H1 (cell line): ENCODE measurements at regions of chr7 and their contacts with region 1.

Region 1: GRCh38 chr7:3143869-3144775 is 100.5 kb upstream of the CARD11 start:
- DNase-seq: no peak
- H3K4me3 ChIP-seq: no peak overlapping the region
- H3K27ac ChIP-seq: no peak overlapping the region
- H3K4me1 ChIP-seq: no peaks in the 10 kb centered on the region
- H3K27me3 ChIP-seq: no peaks in the 10 kb centered on the region
- CTCF ChIP-seq: no peak
- EP300 ChIP-seq: no peak
- POLR2A ChIP-seq: no peak
- RAD21 ChIP-seq: no peak

Region 2: DNA sequence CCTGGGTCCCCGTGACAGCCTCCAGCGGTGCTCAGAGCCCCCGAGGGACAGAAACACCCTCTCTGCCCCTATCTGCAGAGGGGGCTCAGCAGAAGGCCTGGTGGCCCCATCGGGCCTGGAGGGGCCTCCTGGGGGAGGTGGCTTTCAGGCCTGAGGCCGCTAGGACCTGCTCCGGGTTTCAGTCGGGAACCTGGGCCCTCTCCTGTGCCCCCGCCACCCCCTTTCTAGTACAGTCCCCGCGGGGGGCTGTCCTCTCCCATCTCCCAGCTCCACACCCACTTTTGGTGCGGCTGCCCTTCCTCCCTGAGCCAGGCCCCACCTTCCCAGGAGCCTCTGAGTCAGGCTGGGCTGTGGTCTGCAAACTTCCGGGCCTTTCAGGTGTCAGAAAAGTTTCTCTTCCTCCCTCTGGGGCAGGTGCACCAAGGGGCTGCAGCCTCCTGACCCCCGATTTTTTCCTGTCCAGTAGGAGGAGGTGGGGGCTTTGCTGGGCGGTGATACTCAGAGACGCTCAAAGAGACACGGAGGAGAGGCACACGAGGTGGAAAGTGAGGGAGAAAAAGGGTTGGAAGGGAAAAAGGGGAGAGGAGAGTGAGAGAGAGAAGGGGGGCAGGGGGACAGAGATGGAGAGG is 101.1 kb before region 1 on chr7:
- CTCF ChIA-PET with region 1: no interaction called
- POLR2A ChIA-PET with region 1: no interaction called
- DNase-seq: peak in 1 of 2 experiments; percentile 63
- H3K4me3 ChIP-seq: peak overlapping the region; percentile 49 to 99 (median 56)
- H3K27ac ChIP-seq: no peak overlapping the region
- H3K4me1 ChIP-seq: peaks cover 0 to 11% (median 6%) of the 10 kb centered on the region in 4 experiments; a peak in 5 of 7 replicates
- H3K27me3 ChIP-seq: no peaks in the 10 kb centered on the region
- CTCF ChIP-seq: no peak
- EP300 ChIP-seq: no peak
- POLR2A ChIP-seq: no peak
- RAD21 ChIP-seq: no peak

Region 3: DNA sequence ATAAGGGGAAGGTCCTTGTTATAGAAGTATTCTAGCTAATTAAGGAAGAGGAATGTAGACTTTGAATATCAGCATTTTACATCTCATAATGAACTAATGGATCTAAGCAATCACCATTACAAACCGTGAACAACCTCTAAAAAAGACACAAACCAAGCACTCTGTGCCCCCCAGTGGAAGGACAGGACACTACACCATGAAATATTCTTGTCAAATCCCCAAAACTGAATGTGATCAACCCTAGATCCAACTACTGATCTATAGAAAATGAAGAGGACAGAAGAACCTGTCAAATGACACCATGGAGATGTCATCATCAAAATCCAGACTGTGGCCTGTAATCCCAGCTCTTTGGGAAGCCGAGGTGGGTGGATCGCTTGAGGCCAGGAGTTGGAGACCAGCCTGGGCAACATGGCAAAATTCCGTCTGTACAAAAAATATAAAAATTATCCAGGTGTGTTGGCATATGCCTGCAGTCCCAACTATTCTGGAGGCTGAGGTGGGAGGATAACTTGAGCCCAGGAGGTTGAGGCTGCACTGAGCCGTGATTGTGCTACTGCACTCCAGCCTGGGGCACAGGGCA is 10.9 kb after region 1 on chr7:
- CTCF ChIA-PET with region 1: interaction called, 12 read pairs
- POLR2A ChIA-PET with region 1: no interaction called
- DNase-seq: no peak
- H3K4me3 ChIP-seq: no peak overlapping the region
- H3K27ac ChIP-seq: no peak overlapping the region
- H3K4me1 ChIP-seq: peaks cover 0 to 6% (median 2%) of the 10 kb centered on the region in 4 experiments; a peak in 3 of 7 replicates
- H3K27me3 ChIP-seq: no peaks in the 10 kb centered on the region
- CTCF ChIP-seq: peak in 2 of 3 experiments; percentile 59 to 74; a peak in 3 of 4 replicates
- EP300 ChIP-seq: no peak
- POLR2A ChIP-seq: no peak
- RAD21 ChIP-seq: peak; percentile 81 to 84